Activated CD4-positive, alpha-beta T cell treated with anti-CD3 and anti-CD28 coated beads, Interleukin-2, amount 10 ng/mL, durations not matched to agents 24 days and 14 days (primary cell): ENCODE measurements at regions of chr11 and their contacts with region 1.

Region 1: GRCh38 chr11:6926208-6927029 is at the start of gene ZNF215:
- DNase-seq: peak; percentile 85
- H3K4me3 Mint-ChIP-seq: peak within 1 kb of the TSS; percentile 93
- H3K27ac Mint-ChIP-seq: peak within 1 kb of the TSS; percentile 35
- H3K4me1 Mint-ChIP-seq: peaks cover 22% of the 10 kb centered on the region
- H3K27me3 Mint-ChIP-seq: peaks cover 39% of the 10 kb centered on the region
- total RNA-seq, gene ZNF215: 3.4 and 3.6 TPM in 2 replicates

Region 2: DNA sequence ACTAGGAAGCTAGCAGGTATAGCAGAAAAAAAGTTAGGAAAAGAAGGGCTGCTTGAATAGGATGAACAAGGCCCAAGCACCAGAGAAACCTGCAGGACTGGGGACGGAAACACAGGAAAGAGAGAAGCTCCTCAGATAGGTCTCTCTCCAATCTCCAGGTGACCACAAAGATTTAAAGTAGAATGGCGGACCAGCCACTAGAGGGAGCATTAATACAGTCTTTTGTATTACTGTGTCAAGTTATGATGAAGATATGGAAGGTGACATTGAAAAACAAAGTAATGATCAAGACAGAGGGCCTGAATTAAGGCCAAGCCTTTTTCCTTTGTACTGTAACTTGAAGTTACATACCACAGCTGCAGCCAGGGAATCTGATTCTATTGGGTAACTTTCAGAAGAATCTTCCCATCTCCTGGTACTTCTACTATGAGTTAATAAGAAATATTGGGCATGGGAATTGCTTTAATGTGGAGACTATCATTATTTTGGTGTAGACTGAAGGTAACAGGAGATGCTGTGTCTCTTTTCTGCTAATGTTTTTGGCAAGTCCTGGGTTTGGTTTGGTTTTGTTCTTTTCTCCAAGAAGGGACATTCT is 188.4 kb before region 1 on chr11:
- intact Hi-C with region 1: loop called (anchors 5 kb)
- DNase-seq: peak; percentile 91
- H3K4me3 Mint-ChIP-seq: no peak overlapping the region
- H3K27ac Mint-ChIP-seq: peak overlapping the region; percentile 45
- H3K4me1 Mint-ChIP-seq: peaks cover 80% of the 10 kb centered on the region
- H3K27me3 Mint-ChIP-seq: no peaks in the 10 kb centered on the region

Region 3: GRCh38 chr11:6812390-6813005 is 113.9 kb before region 1 on chr11:
- intact Hi-C with region 1: loop called (anchors 10 kb)
- DNase-seq: peak; percentile 83
- H3K4me3 Mint-ChIP-seq: no peak overlapping the region
- H3K27ac Mint-ChIP-seq: no peak overlapping the region
- H3K4me1 Mint-ChIP-seq: no peaks in the 10 kb centered on the region
- H3K27me3 Mint-ChIP-seq: peaks cover 25% of the 10 kb centered on the region

Region 4: GRCh38 chr11:6828103-6828502 is 98.3 kb before region 1 on chr11:
- intact Hi-C with region 1: no loop called
- DNase-seq: no peak
- H3K4me3 Mint-ChIP-seq: no peak overlapping the region
- H3K27ac Mint-ChIP-seq: no peak overlapping the region
- H3K4me1 Mint-ChIP-seq: no peaks in the 10 kb centered on the region
- H3K27me3 Mint-ChIP-seq: peaks cover 4% of the 10 kb centered on the region

Region 5: DNA sequence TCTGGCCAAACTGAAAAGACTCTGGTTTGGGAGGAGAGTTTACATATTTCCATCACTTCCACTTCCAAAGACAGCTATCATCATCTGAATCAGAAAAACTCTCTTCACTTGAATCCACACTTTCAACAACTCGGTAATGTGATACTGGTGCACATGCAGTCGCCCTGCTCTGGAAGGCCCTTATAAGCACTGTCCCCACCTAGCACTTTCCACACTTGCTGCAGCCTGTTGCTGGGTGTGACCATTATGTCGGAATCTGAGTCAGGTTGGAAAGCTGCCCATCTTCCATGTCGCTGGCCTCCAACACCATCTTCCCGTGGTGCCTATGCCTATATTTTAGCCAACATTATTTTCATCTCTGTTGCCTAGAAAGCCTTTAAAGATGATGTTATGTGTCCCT is 82.1 kb before region 1 on chr11:
- intact Hi-C with region 1: no loop called
- DNase-seq: no peak
- H3K4me3 Mint-ChIP-seq: no peak overlapping the region
- H3K27ac Mint-ChIP-seq: no peak overlapping the region
- H3K4me1 Mint-ChIP-seq: peaks cover 2% of the 10 kb centered on the region
- H3K27me3 Mint-ChIP-seq: no peaks in the 10 kb centered on the region

Region 6: DNA sequence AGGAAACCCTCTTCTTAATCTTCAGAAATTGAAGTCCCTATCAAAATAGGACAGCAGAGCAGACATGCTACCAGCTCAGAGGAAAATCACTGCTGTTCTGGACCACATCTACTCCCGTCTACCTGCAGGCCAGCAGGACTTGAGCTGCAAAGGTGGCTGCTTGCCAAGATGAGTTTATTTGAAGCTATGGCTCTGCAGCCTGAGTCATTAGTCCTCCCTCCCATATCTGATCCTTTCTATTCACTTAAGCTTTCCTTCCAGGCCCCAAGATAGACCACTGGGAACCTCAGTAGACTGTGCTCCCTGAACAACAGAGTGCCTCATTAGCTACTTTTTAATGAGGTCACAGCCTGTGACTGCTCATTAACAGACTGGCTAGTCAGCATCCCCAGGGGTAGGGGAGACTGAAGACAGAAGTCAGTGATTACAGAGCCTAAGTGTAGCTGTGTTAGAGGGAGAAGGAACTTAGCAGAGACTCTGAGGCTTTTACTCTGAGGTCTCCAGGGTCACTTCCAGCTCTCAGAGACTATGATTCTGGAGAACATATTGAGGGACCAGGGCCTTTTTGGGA is 70.4 kb before region 1 on chr11:
- intact Hi-C with region 1: loop called (anchors 5 kb)
- DNase-seq: no peak
- H3K4me3 Mint-ChIP-seq: no peak overlapping the region
- H3K27ac Mint-ChIP-seq: no peak overlapping the region
- H3K4me1 Mint-ChIP-seq: peaks cover 5% of the 10 kb centered on the region
- H3K27me3 Mint-ChIP-seq: no peaks in the 10 kb centered on the region